WTC11 (cell line): ENCODE measurements at regions of chr17 and their contacts with region 1.

Region 1: DNA sequence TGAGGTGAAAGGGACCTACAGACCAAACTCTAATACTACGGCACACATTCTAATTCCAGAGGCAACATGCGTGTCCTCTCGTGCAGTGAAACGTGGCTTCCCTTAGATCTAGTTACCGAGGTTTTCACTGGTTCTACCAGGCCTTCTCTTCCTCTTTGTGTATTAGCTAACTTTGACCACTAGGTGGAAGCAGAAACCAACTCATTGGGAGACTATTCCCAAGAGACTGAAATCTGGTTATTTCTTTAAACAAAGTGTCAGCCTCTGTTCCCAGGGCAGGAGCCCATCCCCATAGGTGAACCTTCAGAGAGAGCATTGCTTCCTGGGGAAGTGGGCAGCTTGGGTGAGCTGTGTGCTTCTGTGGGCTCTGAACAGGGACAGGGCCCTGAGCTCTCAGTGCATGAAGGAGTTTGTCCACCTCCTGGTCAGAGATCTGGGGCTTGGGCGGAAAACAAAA is 19.7 kb upstream of the RCVRN start:
- DNase-seq: no peak
- ATAC-seq: peak; percentile 82
- H3K4me3 Mint-ChIP-seq: no peak overlapping the region
- H3K27ac Mint-ChIP-seq: no peak overlapping the region
- H3K4me1 Mint-ChIP-seq: 0 out of 2 replicates have a peak, but pooled peaks cover 4% of the 10 kb centered on the region
- H3K27me3 Mint-ChIP-seq: no peaks in the 10 kb centered on the region
- CTCF ChIP-seq: peak; percentile 67

Region 2: DNA sequence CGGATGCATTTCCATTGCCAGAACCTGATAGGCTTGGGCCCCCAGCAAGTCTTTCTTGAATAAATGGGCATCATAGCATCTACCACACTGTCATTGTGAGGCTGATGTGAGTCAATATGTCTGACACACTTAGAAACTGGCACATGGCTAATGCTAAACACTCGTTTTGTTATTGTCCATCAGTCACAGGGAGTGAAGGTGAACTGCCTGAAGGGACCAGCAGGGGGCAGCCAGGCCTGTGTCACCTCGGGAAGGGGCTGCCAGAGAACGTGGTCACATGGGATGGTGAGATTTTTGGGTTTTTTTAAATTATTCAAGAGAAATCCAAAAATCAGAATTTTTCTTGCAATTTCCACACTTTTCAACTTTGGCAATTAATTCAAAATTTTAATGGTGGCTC is 18.9 kb before region 1 on chr17:
- CTCF ChIA-PET with region 1: interaction called, 13 read pairs
- POLR2A ChIA-PET with region 1: no interaction called
- DNase-seq: peak; percentile 74
- ATAC-seq: peak; percentile 79
- H3K4me3 Mint-ChIP-seq: no peak overlapping the region
- H3K27ac Mint-ChIP-seq: no peak overlapping the region
- H3K4me1 Mint-ChIP-seq: peaks cover 16% of the 10 kb centered on the region
- H3K27me3 Mint-ChIP-seq: no peaks in the 10 kb centered on the region; the same call in 1 of the 2 replicates
- CTCF ChIP-seq: peak; percentile 82

Region 3: DNA sequence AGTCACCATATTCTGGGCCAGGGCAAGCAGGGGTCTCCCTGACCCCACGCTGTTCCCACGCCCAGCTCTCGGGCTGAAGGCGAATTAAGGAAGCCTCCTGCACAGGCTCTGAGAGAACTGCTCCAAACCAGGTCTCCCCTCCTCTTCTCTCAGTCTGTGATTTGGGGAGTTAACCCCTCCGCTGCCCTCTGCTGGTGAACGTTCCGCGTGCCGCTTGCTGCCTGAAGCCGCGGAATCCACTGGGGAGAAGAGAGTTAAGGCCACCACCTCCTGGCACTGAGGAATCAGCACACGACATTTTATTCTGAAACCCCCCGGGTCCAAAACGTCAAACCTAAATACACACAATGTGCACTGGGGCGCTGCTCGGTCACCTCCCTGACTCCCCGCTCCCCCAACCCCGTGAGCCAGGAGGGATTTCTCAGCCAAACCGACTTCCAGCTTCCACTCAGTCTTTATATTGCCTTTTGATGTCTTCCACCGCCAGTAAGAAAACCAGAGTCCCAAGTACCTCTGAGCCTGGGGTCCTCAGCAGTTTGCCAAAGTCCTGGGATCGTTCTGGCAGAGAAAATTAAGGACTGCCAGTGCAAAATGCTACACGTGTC is 34.7 kb after region 1 on chr17:
- CTCF ChIA-PET with region 1: interaction called, 112 read pairs
- POLR2A ChIA-PET with region 1: no interaction called
- DNase-seq: peak; percentile 83
- ATAC-seq: peak; percentile 79
- H3K4me3 Mint-ChIP-seq: peak overlapping the region; percentile 57
- H3K27ac Mint-ChIP-seq: no peak overlapping the region
- H3K4me1 Mint-ChIP-seq: peaks cover 32% of the 10 kb centered on the region
- H3K27me3 Mint-ChIP-seq: no peaks in the 10 kb centered on the region
- CTCF ChIP-seq: peak; percentile 48

Region 4: DNA sequence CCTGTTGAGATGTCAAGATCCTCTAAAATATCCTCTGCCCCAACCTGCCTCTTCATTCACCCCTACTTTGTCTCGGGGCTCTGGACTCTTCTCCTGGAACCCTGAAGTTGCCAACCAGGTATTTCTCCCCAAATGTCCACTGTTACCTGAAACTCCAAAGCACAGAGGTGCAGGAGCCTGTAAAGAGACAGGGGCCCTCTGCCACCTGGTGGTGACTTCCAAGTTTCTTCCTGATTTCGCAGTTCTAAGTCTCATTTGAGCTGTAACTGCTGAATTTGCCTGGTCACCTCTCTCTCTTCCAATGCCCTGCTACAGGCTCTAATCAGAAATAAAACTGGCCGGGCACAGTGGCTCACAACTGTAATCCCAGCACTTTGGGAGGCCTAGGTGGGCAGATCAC is 57.4 kb after region 1 on chr17:
- CTCF ChIA-PET with region 1: interaction called, 35 read pairs
- POLR2A ChIA-PET with region 1: no interaction called
- DNase-seq: peak; percentile 63
- ATAC-seq: peak; percentile 84
- H3K4me3 Mint-ChIP-seq: no peak overlapping the region
- H3K27ac Mint-ChIP-seq: no peak overlapping the region
- H3K4me1 Mint-ChIP-seq: peaks cover 3% of the 10 kb centered on the region
- H3K27me3 Mint-ChIP-seq: no peaks in the 10 kb centered on the region
- CTCF ChIP-seq: 0 out of 2 replicates have a peak, but pooled peaks have one; percentile 44

Region 5: GRCh38 chr17:10046786-10047785 is 122.3 kb after region 1 on chr17:
- CTCF ChIA-PET with region 1: no interaction called
- POLR2A ChIA-PET with region 1: no interaction called
- DNase-seq: no peak
- ATAC-seq: no peak
- H3K4me3 Mint-ChIP-seq: no peak overlapping the region
- H3K27ac Mint-ChIP-seq: no peak overlapping the region
- H3K4me1 Mint-ChIP-seq: peaks cover 18% of the 10 kb centered on the region
- H3K27me3 Mint-ChIP-seq: no peaks in the 10 kb centered on the region
- CTCF ChIP-seq: no peak

Region 6: DNA sequence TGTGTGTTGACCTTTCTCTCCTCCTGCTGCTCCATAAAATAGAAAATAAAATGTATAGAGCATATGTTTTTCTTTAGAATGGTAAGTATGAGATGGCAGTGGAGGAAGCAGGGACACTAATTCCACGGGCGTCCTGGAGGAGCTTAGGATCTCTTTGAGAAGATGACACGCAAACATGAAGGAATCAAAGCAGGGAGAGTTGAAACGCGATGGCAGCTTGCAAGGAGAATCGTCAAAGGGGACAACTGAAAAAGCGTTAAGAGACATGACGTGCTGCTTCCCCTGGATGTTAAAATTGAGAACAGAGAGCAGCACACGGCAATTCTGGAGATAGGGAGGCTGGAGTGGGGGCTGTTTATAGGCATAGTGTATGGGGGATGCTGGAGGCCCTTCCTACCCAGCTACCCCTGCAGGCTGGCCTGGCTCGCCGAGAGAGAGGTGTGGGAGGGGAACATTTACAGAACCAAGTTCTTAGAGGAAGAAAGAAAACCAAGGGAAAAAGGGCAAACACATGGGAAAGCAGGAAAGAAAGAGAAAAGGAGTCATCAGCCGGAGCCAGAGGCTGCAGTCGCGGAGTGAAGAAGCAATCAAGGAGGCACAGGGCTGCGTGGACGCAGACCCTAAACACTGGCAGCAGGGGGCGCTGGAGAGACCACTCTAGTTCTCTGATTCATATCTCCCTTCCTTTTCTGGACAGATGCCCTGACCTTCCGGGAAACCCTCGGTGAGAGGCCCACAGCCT is 392.2 kb after region 1 on chr17:
- CTCF ChIA-PET with region 1: no interaction called
- POLR2A ChIA-PET with region 1: no interaction called
- DNase-seq: peak; percentile 77
- ATAC-seq: peak; percentile 89
- H3K4me3 Mint-ChIP-seq: no peak overlapping the region
- H3K27ac Mint-ChIP-seq: no peak overlapping the region
- H3K4me1 Mint-ChIP-seq: peaks cover 14% of the 10 kb centered on the region
- H3K27me3 Mint-ChIP-seq: peaks cover 8% of the 10 kb centered on the region
- CTCF ChIP-seq: peak; percentile 80